Mammary epithelial cell (primary cell): ENCODE measurements at regions of chr14 and their contacts with region 1.

Region 1: DNA sequence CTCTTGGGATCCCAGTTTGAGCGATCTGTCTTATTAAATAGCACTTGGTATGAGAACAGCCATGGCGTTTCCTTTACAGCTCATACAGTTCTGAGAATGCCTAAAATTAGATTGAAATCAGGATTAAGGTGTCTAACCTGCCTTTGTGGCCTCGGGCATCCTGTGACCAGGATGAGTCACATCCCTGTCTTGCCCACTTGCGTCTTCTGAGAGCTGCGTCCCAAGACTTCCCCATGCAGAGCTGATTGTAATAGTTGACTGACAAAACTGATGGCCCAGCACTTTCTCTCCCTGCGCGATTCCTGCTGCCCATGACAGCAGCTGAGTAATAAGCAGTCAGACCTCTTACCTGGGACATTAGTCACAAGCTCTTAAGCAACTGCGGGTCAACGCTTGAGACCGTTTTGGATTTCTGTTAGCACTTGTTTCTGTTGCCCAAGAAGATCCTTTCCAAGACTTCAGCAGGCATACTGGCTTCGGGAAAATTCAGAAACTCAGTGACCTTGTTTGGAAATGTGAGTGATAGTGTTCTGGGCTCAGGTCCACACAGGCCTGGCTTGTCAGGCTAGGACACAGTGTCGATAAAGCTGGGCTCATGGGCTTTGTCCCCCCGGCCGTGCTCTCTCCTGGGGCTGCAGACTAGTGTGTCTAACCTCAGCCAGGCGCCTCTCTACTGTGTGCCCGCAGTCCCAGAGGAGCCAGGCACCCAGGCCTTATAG is 169.9 kb upstream of the HIF1A start:
- DNase-seq: peak; percentile 100
- H3K4me3 ChIP-seq: no peak overlapping the region
- H3K27ac ChIP-seq: peak overlapping the region; percentile 89
- H3K4me1 ChIP-seq: peaks cover 62% of the 10 kb centered on the region
- H3K27me3 ChIP-seq: no peaks in the 10 kb centered on the region
- CTCF ChIP-seq: no peak

Region 2: DNA sequence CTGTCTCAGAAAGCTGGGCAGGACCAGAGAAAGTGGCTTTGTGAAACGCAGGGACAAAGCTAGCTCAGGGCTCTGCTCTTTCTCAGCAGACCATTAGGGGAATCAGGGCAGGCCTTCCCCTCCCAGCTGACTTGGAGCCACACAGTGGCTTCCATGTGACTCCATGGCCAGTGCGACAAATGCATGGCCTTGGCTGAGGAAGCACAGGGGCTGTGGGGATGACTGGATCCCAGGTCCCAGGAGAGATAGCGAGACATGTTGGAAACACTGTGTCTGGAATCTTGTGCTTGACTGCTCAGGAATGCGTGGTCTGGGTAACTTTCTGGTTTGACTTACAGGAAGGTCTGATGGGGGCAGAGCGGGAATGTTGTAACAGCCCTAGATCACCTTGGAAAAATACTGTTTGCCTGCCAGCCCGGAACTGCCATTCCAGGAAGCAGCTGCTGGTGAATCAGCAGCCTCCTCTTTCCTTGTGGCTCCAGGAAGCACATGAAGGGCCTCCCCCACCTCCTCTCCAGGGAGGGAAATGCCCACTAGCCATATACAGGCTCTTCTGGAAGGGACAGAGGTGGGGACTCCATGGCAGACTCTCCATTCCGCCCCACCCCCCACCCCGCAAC is 36.3 kb after region 1 on chr14:
- CTCF ChIA-PET with region 1: interaction called, 4 read pairs
- dilution Hi-C with region 1: no loop called
- in situ Hi-C with region 1: no loop called
- intact Hi-C with region 1: loop called (anchors 1 kb)
- DNase-seq: peak; percentile 91
- H3K4me3 ChIP-seq: no peak overlapping the region
- H3K27ac ChIP-seq: peak overlapping the region; percentile 96
- H3K4me1 ChIP-seq: peaks cover 70% of the 10 kb centered on the region
- H3K27me3 ChIP-seq: no peaks in the 10 kb centered on the region
- CTCF ChIP-seq: no peak

Region 3: DNA sequence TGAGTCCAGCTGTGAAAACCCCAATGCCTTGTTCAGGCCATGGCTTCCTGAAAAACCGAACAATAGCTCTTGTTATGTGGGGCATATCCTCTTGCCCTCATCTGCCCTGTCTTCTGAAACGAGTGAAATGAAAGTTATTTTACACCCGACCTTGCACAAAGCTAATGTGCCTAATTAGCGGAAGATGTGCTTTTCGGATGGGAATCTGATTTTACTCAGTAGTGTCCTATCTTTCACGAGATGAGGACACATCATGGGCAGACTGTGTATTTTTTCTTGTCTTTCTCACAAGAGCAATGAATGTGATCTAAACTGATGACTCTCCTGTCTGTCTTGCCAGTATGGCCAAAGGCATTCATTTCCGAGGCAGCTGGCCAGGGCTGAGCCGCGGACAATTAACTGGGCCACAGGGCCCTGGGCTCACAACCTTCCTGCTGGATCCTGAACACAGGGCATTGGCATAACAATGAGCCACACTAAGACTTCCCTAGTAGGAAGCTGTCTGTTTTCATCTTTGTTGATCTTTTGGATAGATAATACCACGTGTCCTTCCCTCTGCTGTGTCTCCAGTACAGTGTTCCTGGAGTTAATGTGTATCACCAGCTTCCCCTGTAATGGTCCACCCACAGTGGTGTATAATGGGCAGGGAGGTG is 83.9 kb after region 1 on chr14:
- CTCF ChIA-PET with region 1: no interaction called
- dilution Hi-C with region 1: no loop called
- in situ Hi-C with region 1: no loop called
- intact Hi-C with region 1: no loop called
- DNase-seq: peak; percentile 50
- H3K4me3 ChIP-seq: no peak overlapping the region
- H3K27ac ChIP-seq: no peak overlapping the region
- H3K4me1 ChIP-seq: peaks cover 12% of the 10 kb centered on the region
- H3K27me3 ChIP-seq: no peaks in the 10 kb centered on the region
- CTCF ChIP-seq: no peak

Region 4: GRCh38 chr14:62002642-62003041 is 477.2 kb after region 1 on chr14:
- CTCF ChIA-PET with region 1: no interaction called
- dilution Hi-C with region 1: no loop called
- in situ Hi-C with region 1: no loop called
- intact Hi-C with region 1: no loop called
- DNase-seq: peak; percentile 86
- H3K4me3 ChIP-seq: no peak overlapping the region
- H3K27ac ChIP-seq: no peak overlapping the region
- H3K4me1 ChIP-seq: peaks cover 16% of the 10 kb centered on the region
- H3K27me3 ChIP-seq: no peaks in the 10 kb centered on the region
- CTCF ChIP-seq: no peak